ENCODE measurements at regions of chr5 and their contacts with region 1.

Region 1: DNA sequence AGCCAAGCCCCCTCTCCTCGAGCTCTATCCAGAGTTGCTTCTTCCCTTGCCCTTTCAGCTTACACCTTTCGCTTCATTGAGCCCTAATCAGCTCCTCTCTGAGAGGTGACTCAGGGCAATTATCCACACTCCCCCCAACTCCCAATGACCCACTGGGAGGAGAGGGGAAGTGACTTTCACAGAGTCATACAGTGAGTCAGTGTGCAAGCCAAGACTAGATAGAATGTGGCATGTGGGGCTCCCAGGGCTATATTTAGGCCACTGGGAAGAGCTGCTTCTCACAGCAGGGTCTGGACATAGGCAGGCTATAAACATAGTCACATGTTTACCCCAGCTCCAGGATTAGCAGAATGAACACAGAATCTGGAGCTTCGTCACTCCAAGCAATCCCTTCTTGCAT is 57.4 kb downstream of the NRG2 start:
- DNase-seq: peak; percentile 89
- ATAC-seq: peak; percentile 89
- H3K4me3 ChIP-seq: no peak overlapping the region
- H3K27ac ChIP-seq: peak overlapping the region; percentile 8; the same call in 1 of the 2 replicates
- H3K4me1 ChIP-seq: peaks cover 17% of the 10 kb centered on the region
- H3K27me3 ChIP-seq: no peaks in the 10 kb centered on the region
- CTCF ChIP-seq: no peak

Region 2: GRCh38 chr5:140145818-140146522 is 160.2 kb after region 1 on chr5:
- CTCF ChIA-PET with region 1: no interaction called
- POLR2A ChIA-PET with region 1: interaction called, 10 read pairs
- in situ Hi-C with region 1: no loop called
- intact Hi-C with region 1: loop called (anchors 10 kb)
- DNase-seq: no peak
- ATAC-seq: peak; percentile 78
- H3K4me3 ChIP-seq: peak overlapping the region; percentile 6 to 8; a peak in 2 of 4 replicates
- H3K27ac ChIP-seq: no peak overlapping the region
- H3K4me1 ChIP-seq: peaks cover 5% of the 10 kb centered on the region; the same call in 1 of the 2 replicates
- H3K27me3 ChIP-seq: no peaks in the 10 kb centered on the region
- CTCF ChIP-seq: peak; percentile 80; the same call in 1 of the 2 replicates

Region 3: DNA sequence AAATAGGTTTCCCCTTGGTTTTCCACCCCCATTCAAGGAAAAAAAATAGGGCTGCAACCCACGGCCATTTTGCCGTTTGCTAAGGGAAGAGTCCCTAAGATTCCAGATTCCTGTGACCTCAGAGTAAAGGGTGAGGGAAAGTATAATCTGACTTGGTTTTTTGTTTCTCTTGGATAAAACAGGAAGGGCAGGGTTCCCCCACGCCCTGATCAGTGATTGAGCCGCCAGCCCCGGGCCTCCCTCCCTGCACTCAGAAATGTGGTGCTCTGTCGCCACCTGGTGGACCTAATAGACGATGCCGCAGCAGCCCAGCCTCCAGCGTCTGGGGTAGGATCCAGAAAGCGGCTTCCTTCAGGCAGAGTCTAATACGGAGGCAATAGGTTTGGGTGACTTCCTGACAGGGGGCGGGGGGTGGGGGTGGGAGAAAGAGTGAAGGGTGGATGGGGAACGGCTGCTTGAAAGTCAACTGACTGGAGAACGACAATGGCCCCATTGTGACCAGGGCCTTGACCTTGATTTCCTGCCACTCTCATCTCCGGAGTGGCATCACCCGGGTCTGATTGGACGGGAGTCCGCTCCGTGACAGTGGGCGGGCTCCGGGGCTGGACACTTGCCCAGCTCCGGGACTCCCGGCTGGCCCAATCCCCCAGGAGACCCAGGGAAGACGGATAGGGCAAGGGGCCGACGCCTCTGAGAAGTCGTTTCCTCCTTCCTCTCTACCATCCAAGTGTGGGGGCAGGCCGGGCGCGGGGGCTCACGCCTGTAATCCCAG is 171.5 kb after region 1 on chr5:
- CTCF ChIA-PET with region 1: no interaction called
- POLR2A ChIA-PET with region 1: no interaction called
- in situ Hi-C with region 1: no loop called
- intact Hi-C with region 1: loop called (anchors 10 kb)
- DNase-seq: peak; percentile 57
- ATAC-seq: peak; percentile 98
- H3K4me3 ChIP-seq: peak overlapping the region; percentile 16 to 42
- H3K27ac ChIP-seq: peak overlapping the region; percentile 74
- H3K4me1 ChIP-seq: peaks cover 6% of the 10 kb centered on the region
- H3K27me3 ChIP-seq: no peaks in the 10 kb centered on the region
- CTCF ChIP-seq: peak; percentile 93

Measured in Panc1 (cell line).